OCI-LY7 (cell line): ENCODE measurements at regions of chr1 and their contacts with region 1.

Region 1: DNA sequence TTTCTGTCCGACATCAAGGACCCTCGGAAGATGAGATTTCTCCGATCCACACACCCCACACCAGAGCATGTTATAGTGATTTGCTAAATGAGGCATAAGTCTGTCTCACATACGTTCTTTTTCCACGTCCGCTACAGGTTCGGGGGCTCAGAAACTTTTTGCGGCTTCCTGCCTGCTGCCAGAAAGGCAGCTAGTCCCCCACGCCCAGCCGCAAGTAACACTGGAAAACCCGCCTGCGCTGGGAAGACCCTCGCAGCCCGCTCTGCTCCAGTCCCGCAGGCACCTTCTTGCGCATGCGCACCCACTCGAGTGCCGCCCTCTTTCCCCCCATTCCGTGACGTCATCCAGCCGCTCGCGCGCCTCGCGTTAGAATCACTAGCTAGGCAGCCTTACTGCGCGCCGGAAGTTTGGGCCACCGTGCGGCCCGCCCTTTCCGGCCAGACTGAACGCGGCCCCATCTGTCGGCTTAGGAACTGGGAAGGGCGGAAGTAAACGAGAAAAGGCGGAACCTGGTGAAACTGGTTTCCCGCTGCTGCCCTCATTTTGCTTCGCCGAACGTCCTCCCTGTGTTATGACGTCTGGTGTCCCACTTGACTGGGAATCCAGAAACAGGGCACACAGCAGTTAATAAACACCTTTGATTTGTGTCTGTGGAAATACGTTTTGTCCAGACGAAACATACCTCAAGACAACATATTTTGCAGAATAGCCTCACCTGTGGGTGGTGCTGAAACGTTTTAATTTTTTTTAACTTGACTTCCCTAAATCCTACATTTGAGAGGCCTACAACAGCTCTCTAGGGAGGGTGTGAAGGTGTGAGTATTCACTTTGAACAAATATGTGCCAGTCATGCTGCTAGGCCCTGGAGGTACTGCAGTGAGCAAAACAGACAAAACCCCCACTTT is at the start of gene C1orf74:
- DNase-seq: peak; percentile 98
- H3K4me3 ChIP-seq: peak within 1 kb of the TSS; percentile 93
- H3K27ac ChIP-seq: peak within 1 kb of the TSS; percentile 52
- H3K4me1 ChIP-seq: peaks cover 15% of the 10 kb centered on the region
- CTCF ChIP-seq: peak; percentile 37; the same call in 1 of the 2 replicates
- total RNA-seq, gene C1orf74: 3.7 and 4.4 TPM in 2 replicates

Region 2: GRCh38 chr1:209805875-209806760 is 21.6 kb after region 1 on chr1 and contains the start of gene IRF6:
- CTCF ChIA-PET with region 1: no interaction called
- POLR2A ChIA-PET with region 1: interaction called, 23 read pairs
- intact Hi-C with region 1: no loop called
- DNase-seq: no peak
- H3K4me3 ChIP-seq: no peak within 1 kb of the TSS
- H3K27ac ChIP-seq: no peak within 1 kb of the TSS
- H3K4me1 ChIP-seq: no peaks in the 10 kb centered on the region
- CTCF ChIP-seq: no peak
- total RNA-seq, gene IRF6: not detected in 2 replicates

Region 3: DNA sequence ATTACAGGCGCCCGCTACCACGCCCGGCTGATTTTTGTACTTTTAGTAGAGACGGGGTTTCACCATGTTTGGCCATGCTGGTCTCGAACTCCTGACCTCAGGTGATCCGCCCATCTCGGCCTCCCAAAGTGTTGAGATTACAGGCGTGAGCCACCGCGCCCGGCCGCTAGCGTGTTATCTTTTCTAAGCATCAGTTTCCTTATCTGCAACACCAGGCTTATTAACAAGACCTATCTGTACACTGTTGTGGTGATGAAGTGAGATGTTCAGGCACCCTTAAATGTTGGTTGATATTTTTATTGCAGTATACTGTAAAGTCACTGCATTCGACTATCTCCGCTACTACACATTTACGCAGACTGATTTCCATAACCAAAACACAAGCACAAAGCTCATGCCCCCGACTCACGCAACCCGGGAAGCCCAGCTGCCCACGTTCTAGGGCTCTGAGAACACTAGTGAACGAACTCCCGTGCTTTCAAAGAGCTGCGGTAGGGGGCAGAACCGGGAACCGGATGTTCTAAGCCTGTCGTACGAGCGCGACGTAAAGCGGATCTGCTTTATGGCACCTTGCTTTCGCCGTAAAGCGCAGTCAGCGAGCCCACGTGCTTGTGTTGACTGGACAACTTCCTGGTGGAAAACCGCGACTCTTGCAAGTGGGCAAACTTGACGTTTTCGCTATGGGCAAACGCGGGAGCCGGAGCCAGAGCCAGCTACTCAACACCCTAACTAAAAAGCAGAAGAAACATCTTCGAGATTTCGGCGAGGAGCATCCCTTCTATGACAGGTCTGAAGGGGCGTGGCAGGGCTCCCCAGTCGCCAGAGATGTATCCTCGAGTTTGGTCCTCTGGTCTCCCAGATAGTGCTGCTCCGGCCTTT is 43.1 kb after region 1 on chr1 and contains the start of gene UTP25:
- CTCF ChIA-PET with region 1: interaction called, 5 read pairs
- POLR2A ChIA-PET with region 1: interaction called, 3 read pairs
- intact Hi-C with region 1: loop called (anchors 5 kb)
- DNase-seq: peak; percentile 98
- H3K4me3 ChIP-seq: peak within 1 kb of the TSS; percentile 98
- H3K27ac ChIP-seq: peak within 1 kb of the TSS; percentile 56
- H3K4me1 ChIP-seq: peaks cover 19% of the 10 kb centered on the region
- CTCF ChIP-seq: peak; percentile 78
- total RNA-seq, gene UTP25: 10.4 and 12.8 TPM in 2 replicates